CD4-positive, alpha-beta T cell (primary cell): ENCODE measurements at regions of chr1 and their contacts with region 1.

Region 1: DNA sequence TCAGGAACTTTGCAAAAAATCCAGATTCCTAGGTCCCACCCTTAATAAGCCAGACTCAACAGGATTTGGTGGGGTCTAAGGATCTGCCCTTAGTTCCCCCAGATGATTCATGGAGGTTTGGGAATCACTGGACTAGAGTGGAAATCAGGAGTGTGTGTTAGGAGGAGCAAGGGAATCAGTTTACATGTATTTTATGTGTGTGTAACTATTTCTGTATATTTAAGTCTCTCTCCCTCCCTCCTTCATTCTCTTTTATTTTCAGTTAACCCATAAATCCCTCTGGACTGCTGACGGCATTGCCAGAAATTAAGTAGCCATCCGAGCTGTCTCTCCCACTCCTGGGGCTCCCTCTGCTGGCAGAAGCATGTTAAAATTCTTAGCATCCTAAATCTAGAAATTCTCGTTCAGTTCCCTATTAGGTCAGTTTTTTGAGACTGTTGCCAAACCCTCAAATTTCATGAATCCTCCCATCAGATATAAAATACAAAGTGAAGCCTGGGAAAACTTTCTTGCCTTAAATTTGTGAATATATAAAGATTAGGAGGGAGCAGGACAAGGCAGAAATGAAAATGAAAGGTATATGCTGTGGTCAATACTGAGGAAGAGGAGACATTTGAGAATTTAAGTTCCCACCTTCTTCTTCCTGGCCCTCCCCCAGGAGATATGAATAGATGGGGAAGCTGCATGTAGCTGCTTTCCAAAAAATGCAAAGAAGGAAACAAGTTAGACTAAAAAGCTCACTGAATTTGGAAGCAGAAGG is 11.7 kb upstream of the HSD11B1 start:
- DNase-seq: peak; percentile 45 to 84 (median 66)
- ATAC-seq: peak; percentile 54
- H3K4me3 ChIP-seq: no peak overlapping the region
- H3K4me3 Mint-ChIP-seq: no peak overlapping the region
- H3K27ac ChIP-seq: no peak overlapping the region
- H3K27ac Mint-ChIP-seq: no peak overlapping the region
- H3K4me1 ChIP-seq: peaks cover 9% of the 10 kb centered on the region
- H3K4me1 Mint-ChIP-seq: peaks cover 35% of the 10 kb centered on the region
- H3K27me3 ChIP-seq: no peaks in the 10 kb centered on the region
- H3K27me3 Mint-ChIP-seq: no peaks in the 10 kb centered on the region
- CTCF ChIP-seq: peak; percentile 85

Region 2: GRCh38 chr1:209202830-209203439 is 490.0 kb before region 1 on chr1:
- CTCF ChIA-PET with region 1: no interaction called
- POLR2A ChIA-PET with region 1: no interaction called
- intact Hi-C with region 1: loop called in 1 of 2 experiments (anchors 5 kb)
- DNase-seq: peak in 4 of 14 experiments; percentile 5 to 39 (median 26)
- ATAC-seq: no peak
- H3K4me3 ChIP-seq: no peak overlapping the region
- H3K4me3 Mint-ChIP-seq: no peak overlapping the region
- H3K27ac ChIP-seq: no peak overlapping the region
- H3K27ac Mint-ChIP-seq: no peak overlapping the region
- H3K4me1 ChIP-seq: peaks cover 5% of the 10 kb centered on the region
- H3K4me1 Mint-ChIP-seq: no peaks in the 10 kb centered on the region
- H3K27me3 ChIP-seq: peaks cover 12 to 20% of the 10 kb centered on the region in 2 experiments
- H3K27me3 Mint-ChIP-seq: peaks cover 63% of the 10 kb centered on the region
- CTCF ChIP-seq: peak; percentile 63

Region 3: DNA sequence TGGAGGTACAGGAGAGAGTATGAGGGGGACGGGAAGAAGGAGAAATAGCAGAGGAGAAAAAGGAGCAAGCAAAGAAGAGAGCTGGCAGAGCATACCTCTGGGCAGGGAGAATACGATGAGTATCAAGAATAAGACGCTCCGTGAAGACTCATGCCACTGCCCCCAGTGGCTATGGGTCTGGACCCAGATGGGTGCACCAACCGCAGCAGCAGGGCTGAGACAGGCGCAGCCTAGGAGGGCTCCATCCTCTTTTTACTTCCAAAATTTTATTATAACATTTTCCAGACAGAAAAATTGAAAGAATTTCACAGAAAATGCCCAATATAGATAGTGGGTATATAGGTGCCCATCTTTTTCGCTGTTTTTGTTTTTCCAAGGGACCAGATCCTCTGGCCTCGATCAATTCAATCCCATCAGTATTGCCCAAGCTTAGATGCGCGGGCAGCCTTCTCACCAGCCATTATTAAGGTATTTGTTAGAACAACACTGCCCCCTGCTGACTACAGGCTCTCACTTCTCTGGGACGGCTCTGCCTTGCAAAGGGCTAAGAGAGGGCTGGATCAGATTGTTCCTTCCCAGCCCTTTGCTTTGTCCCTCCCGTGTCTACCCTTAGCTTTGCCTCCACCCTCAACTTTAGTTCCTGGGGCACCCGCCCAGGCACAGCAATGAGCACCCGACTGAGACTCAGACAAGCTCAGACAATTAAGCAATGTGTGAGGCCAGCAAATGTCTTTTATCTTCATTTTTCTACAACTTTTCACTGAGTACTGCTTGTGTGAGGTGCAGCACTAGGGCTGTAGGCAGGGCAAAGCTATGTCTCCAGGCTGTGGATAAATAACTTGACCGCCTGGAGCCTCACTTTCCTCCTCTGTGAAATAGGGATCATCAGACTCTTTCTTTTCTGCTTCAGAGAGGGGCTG is 126.9 kb before region 1 on chr1:
- CTCF ChIA-PET with region 1: interaction called, 4 read pairs
- POLR2A ChIA-PET with region 1: interaction called, 3 read pairs
- intact Hi-C with region 1: loop called in 1 of 2 experiments (anchors 1 kb)
- DNase-seq: peak; percentile 49 to 84 (median 62)
- ATAC-seq: peak; percentile 89
- H3K4me3 ChIP-seq: no peak overlapping the region
- H3K4me3 Mint-ChIP-seq: no peak overlapping the region
- H3K27ac ChIP-seq: no peak overlapping the region
- H3K27ac Mint-ChIP-seq: no peak overlapping the region
- H3K4me1 ChIP-seq: peaks cover 8% of the 10 kb centered on the region
- H3K4me1 Mint-ChIP-seq: peaks cover 12% of the 10 kb centered on the region
- H3K27me3 ChIP-seq: no peaks in the 10 kb centered on the region
- H3K27me3 Mint-ChIP-seq: peaks cover 67% of the 10 kb centered on the region
- CTCF ChIP-seq: peak; percentile 74

Region 4: DNA sequence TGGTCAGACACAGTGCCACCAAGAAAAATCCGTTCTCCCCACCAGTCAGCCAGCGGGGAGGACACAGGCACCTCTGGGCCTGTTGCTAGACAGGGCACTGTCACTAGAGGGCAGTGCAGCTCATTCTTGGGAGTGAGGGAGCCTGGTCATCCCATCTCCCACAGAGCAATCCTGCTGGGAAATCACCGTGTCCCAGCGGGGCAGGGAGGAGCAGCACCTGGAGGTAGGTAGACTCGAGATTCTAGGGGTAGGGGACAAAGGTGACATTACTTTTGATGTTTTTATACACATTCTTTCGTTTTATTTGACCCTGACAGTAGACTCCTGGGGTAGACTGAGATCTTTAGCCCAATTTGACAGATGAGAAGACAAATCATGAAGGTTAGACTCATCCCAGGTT is 116.1 kb before region 1 on chr1:
- CTCF ChIA-PET with region 1: no interaction called
- POLR2A ChIA-PET with region 1: no interaction called
- intact Hi-C with region 1: loop called in 1 of 2 experiments (anchors 2 kb)
- DNase-seq: peak; percentile 34 to 77 (median 54)
- ATAC-seq: peak; percentile 74
- H3K4me3 ChIP-seq: no peak overlapping the region
- H3K4me3 Mint-ChIP-seq: no peak overlapping the region
- H3K27ac ChIP-seq: no peak overlapping the region
- H3K27ac Mint-ChIP-seq: no peak overlapping the region
- H3K4me1 ChIP-seq: no peaks in the 10 kb centered on the region
- H3K4me1 Mint-ChIP-seq: no peaks in the 10 kb centered on the region
- H3K27me3 ChIP-seq: peaks cover 4 to 10% of the 10 kb centered on the region in 2 experiments
- H3K27me3 Mint-ChIP-seq: no peaks in the 10 kb centered on the region
- CTCF ChIP-seq: peak; percentile 94

Region 5: DNA sequence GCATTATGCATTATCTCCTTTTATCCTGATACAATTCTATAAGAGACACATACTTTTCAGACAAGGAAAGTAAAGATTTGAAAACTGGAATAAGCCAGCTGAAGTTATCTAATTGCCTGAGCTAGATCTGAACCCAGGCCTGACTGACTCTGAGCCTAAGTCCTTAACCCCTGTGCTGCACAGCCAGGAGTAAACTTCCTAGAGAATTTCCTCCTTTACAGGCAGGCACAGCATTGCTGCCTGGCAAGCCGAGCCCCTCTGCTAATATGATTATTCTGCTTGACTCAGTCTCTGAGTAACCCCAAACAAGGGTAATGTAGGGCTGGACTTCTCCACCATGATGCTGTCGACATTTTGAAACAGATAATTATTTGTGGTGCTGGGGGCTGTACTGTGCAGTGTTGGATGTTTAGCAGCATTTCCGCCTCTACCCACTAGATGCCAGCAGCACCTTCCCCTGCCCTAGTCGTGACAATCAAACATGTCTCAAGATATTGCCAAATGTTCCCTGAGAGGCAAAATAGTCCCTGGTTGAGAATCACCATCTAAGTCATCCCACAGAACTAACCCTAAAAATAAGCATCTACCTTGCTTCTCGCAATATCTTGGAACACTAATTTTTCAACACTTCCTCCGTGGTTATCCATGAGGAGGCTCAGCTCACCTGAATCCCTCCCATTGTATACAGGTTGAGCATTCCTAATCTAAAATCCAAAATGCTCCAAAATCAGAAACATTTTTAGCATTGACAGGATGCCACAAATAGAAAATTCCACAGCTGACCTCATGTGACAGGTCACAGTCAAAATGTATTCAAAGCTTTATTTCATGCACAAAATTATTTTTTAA is 90.9 kb before region 1 on chr1:
- CTCF ChIA-PET with region 1: interaction called, 3 read pairs
- POLR2A ChIA-PET with region 1: no interaction called
- intact Hi-C with region 1: loop called (anchors 1 to 2 kb)
- DNase-seq: peak in 6 of 14 experiments; percentile 7 to 67 (median 39)
- ATAC-seq: peak; percentile 81
- H3K4me3 ChIP-seq: no peak overlapping the region
- H3K4me3 Mint-ChIP-seq: no peak overlapping the region
- H3K27ac ChIP-seq: no peak overlapping the region
- H3K27ac Mint-ChIP-seq: no peak overlapping the region
- H3K4me1 ChIP-seq: no peaks in the 10 kb centered on the region
- H3K4me1 Mint-ChIP-seq: no peaks in the 10 kb centered on the region
- H3K27me3 ChIP-seq: no peaks in the 10 kb centered on the region
- H3K27me3 Mint-ChIP-seq: peaks cover 4% of the 10 kb centered on the region
- CTCF ChIP-seq: peak; percentile 47

Region 6: GRCh38 chr1:209672705-209673630 is 20.0 kb before region 1 on chr1:
- CTCF ChIA-PET with region 1: interaction called, 4 read pairs
- POLR2A ChIA-PET with region 1: interaction called, 3 read pairs
- intact Hi-C with region 1: loop called in 1 of 2 experiments (anchors 1 kb)
- DNase-seq: peak in 4 of 14 experiments; percentile 23 to 84 (median 77)
- ATAC-seq: peak; percentile 70
- H3K4me3 ChIP-seq: no peak overlapping the region
- H3K4me3 Mint-ChIP-seq: peak overlapping the region; percentile 36
- H3K27ac ChIP-seq: no peak overlapping the region
- H3K27ac Mint-ChIP-seq: peak overlapping the region; percentile 69
- H3K4me1 ChIP-seq: peaks cover 43% of the 10 kb centered on the region
- H3K4me1 Mint-ChIP-seq: peaks cover 44% of the 10 kb centered on the region
- H3K27me3 ChIP-seq: peaks cover 0 to 15% of the 10 kb centered on the region in 2 experiments
- H3K27me3 Mint-ChIP-seq: peaks cover 39% of the 10 kb centered on the region
- CTCF ChIP-seq: no peak

Region 7: GRCh38 chr1:209769171-209769904 is 76.4 kb after region 1 on chr1:
- CTCF ChIA-PET with region 1: no interaction called
- POLR2A ChIA-PET with region 1: interaction called, 10 read pairs
- intact Hi-C with region 1: loop called in 1 of 2 experiments (anchors 5 kb)
- DNase-seq: peak; percentile 31 to 91 (median 76)
- ATAC-seq: peak; percentile 77
- H3K4me3 ChIP-seq: peak overlapping the region; percentile 71
- H3K4me3 Mint-ChIP-seq: no peak overlapping the region
- H3K27ac ChIP-seq: peak overlapping the region; percentile 54 to 73
- H3K27ac Mint-ChIP-seq: no peak overlapping the region
- H3K4me1 ChIP-seq: peaks cover 77% of the 10 kb centered on the region
- H3K4me1 Mint-ChIP-seq: peaks cover 50% of the 10 kb centered on the region
- H3K27me3 ChIP-seq: no peaks in the 10 kb centered on the region
- H3K27me3 Mint-ChIP-seq: no peaks in the 10 kb centered on the region
- CTCF ChIP-seq: no peak

Region 8: GRCh38 chr1:209886219-209886536 is 193.3 kb after region 1 on chr1:
- CTCF ChIA-PET with region 1: no interaction called
- POLR2A ChIA-PET with region 1: no interaction called
- intact Hi-C with region 1: no loop called
- DNase-seq: no peak
- ATAC-seq: no peak
- H3K4me3 ChIP-seq: no peak overlapping the region
- H3K4me3 Mint-ChIP-seq: no peak overlapping the region
- H3K27ac ChIP-seq: no peak overlapping the region
- H3K27ac Mint-ChIP-seq: no peak overlapping the region
- H3K4me1 ChIP-seq: no peaks in the 10 kb centered on the region
- H3K4me1 Mint-ChIP-seq: no peaks in the 10 kb centered on the region
- H3K27me3 ChIP-seq: peaks cover 6 to 9% of the 10 kb centered on the region in 2 experiments
- H3K27me3 Mint-ChIP-seq: peaks cover 56% of the 10 kb centered on the region
- CTCF ChIP-seq: no peak